K562 (cell line): ENCODE measurements at regions of chr16 and their contacts with region 1.

Region 1: DNA sequence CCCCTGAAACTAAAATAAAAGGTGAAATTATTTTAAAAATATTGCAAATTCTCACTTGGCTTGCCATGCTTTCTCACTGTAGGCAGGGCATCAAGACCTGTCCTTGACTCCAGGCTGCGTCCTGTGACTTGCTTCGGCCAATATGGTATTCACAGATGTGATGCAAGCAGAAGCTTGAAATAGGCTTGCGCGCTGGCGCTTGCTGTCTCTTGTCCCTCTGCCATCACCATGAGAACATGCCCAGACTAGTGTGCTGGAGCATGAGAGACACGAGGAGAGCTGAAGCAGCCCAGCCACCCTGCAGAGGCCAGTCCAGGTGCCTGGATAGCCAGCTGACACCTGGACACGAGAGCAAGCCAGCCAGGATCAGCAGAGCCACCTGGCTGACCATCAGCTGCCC is 21.8 kb upstream of the ZKSCAN2 start:
- DNase-seq: no peak
- ATAC-seq: no peak
- H3K4me3 ChIP-seq: no peak overlapping the region
- H3K27ac ChIP-seq: no peak overlapping the region
- H3K4me1 ChIP-seq: no peaks in the 10 kb centered on the region
- H3K27me3 ChIP-seq: peaks cover 5 to 6% of the 10 kb centered on the region in 2 experiments; a peak in 2 of 5 replicates
- CTCF ChIP-seq: no peak
- EP300 ChIP-seq: no peak
- POLR2A ChIP-seq: no peak
- RAD21 ChIP-seq: no peak

Region 2: GRCh38 chr16:24950275-24950674 is 329.2 kb before region 1 on chr16:
- CTCF ChIA-PET with region 1: no interaction called
- POLR2A ChIA-PET with region 1: no interaction called
- in situ Hi-C with region 1: no loop called
- intact Hi-C with region 1: no loop called
- DNase-seq: no peak
- ATAC-seq: no peak
- H3K4me3 ChIP-seq: no peak overlapping the region
- H3K27ac ChIP-seq: no peak overlapping the region
- H3K4me1 ChIP-seq: no peaks in the 10 kb centered on the region
- H3K27me3 ChIP-seq: no peaks in the 10 kb centered on the region
- CTCF ChIP-seq: no peak
- EP300 ChIP-seq: no peak
- POLR2A ChIP-seq: no peak
- RAD21 ChIP-seq: no peak

Region 3: GRCh38 chr16:25372716-25373115 is 93.2 kb after region 1 on chr16:
- CTCF ChIA-PET with region 1: interaction called, 3 read pairs
- POLR2A ChIA-PET with region 1: interaction called, 3 read pairs
- in situ Hi-C with region 1: no loop called
- intact Hi-C with region 1: loop called (anchors 1 kb)
- DNase-seq: peak in 1 of 4 experiments; percentile 9
- ATAC-seq: peak; percentile 55; the same call in 2 of the 3 replicates
- H3K4me3 ChIP-seq: no peak overlapping the region
- H3K27ac ChIP-seq: no peak overlapping the region
- H3K4me1 ChIP-seq: no peaks in the 10 kb centered on the region
- H3K27me3 ChIP-seq: no peaks in the 10 kb centered on the region
- CTCF ChIP-seq: peak; percentile 49 to 79 (median 61)
- EP300 ChIP-seq: no peak
- POLR2A ChIP-seq: no peak
- RAD21 ChIP-seq: peak; percentile 35 to 65